Lower leg skin (tissue), 4 donors: ENCODE measurements at regions of chr5 and their contacts with region 1.

Region 1: DNA sequence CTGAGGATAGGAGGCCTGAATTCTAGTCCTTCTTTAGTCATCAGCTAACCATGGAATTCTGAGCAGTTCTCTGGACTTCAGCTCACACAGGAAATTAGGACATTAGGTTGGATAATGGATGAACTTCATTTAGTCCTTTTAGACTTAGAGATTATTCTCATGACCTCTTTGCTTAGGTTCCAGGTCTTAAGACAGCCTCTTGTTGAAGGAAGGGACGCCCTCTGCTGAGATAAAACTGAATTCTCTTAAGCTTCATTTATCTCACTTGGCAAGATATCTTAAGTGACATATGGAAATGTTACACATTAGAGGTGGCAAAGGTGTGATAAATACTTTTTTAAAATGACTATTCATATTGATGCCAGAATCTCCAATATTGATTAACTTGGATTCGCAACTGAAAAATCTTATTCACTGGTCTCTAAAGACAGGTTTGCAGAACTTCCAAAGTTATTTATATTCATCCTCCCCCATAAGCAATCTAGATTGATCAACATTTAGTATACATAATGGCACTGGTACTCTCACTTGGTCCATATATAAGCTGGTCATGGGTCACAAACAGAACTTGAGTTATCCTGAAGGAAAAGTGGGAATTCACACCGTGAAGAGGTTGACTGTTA is 16.9 kb upstream of the ZNF366 start:
- DNase-seq: no peak
- H3K4me3 ChIP-seq: no peak overlapping the region
- CTCF ChIP-seq: no peak
- POLR2A ChIP-seq: no peak

Region 2: GRCh38 chr5:71782771-71783770 is 741.0 kb before region 1 on chr5:
- intact Hi-C with region 1: loop called (anchors 5 kb)
- DNase-seq: peak; percentile 82 to 95
- H3K4me3 ChIP-seq: no peak overlapping the region
- CTCF ChIP-seq: peak in 1 of 3 donors; percentile 40
- POLR2A ChIP-seq: no peak

Region 3: GRCh38 chr5:72378636-72379290 is 145.3 kb before region 1 on chr5:
- intact Hi-C with region 1: loop called (anchors 10 kb)
- DNase-seq: peak in 1 of 2 donors; percentile 47
- H3K4me3 ChIP-seq: no peak overlapping the region
- CTCF ChIP-seq: no peak
- POLR2A ChIP-seq: no peak